ENCODE measurements at regions of chr20 and their contacts with region 1.

Region 1: DNA sequence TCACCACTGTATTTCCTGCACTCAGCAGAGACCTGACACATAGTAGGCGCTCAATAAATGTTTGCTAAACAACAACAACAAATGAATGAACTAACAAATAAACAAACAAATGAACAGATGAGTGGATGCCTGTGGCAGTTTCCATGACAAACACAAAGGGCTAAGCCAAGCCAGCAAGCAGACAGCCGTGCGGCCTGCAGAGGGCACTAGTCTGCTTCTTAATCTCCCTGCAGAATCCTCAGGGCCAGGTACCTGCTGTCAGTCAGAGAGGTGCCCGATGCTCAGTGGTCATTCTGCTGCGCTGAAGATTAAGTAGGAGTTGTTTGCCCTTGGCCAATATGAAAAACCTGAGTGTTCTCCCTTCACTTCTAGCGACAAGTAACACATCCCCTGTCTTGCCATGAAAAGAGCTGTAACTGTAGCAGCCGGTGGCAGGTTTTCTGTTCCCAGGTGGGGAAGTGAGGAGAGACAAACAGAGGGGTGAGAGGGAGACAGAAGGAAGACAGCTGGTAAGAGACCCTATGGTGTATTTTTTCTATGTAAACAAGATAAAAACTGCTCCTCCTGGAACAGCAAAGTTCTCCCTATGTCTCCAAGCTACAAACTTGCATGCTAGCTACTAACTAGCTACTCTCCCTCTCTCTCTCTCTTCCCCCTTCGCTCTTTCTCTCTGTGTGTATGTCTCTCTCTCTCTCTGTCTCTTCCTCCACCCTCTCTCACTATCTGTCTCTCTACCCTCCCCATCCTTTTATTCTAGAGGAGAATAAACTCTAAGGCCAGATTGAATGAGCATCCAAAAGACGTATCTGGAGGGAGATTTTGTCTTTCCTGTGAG is at the start of gene MC3R:
- DNase-seq: peak in 7 of 9 donors; percentile 9 to 34 (median 21)
- ATAC-seq: no peak
- H3K4me3 ChIP-seq: no peak within 1 kb of the TSS
- H3K4me3 Mint-ChIP-seq: no peak within 1 kb of the TSS
- H3K27ac ChIP-seq: no peak within 1 kb of the TSS
- H3K27ac Mint-ChIP-seq: no peak within 1 kb of the TSS
- H3K4me1 ChIP-seq: no peaks in the 10 kb centered on the region
- H3K4me1 Mint-ChIP-seq: no peaks in the 10 kb centered on the region
- H3K27me3 ChIP-seq: no peaks in the 10 kb centered on the region
- H3K27me3 Mint-ChIP-seq: peaks cover 10 to 70% (median 59%) of the 10 kb centered on the region in 5 donors
- total RNA-seq, gene MC3R: not detected

Region 2: GRCh38 chr20:56343861-56344381 is 95.8 kb after region 1 on chr20:
- CTCF ChIA-PET with region 1: no interaction called
- POLR2A ChIA-PET with region 1: no interaction called
- intact Hi-C with region 1: loop called (anchors 2 to 5 kb)
- DNase-seq: peak in 6 of 9 donors; percentile 11 to 57 (median 22)
- ATAC-seq: peak; percentile 66
- H3K4me3 ChIP-seq: no peak overlapping the region
- H3K4me3 Mint-ChIP-seq: peak overlapping the region in 8 of 10 donors; percentile 13 to 52 (median 39)
- H3K27ac ChIP-seq: no peak overlapping the region
- H3K27ac Mint-ChIP-seq: no peak overlapping the region
- H3K4me1 ChIP-seq: no peaks in the 10 kb centered on the region
- H3K4me1 Mint-ChIP-seq: peaks cover 0 to 13% (median 6%) of the 10 kb centered on the region in 7 donors
- H3K27me3 ChIP-seq: peaks cover 0 to 10% of the 10 kb centered on the region in 2 donors
- H3K27me3 Mint-ChIP-seq: peaks cover 46 to 79% (median 73%) of the 10 kb centered on the region in 5 donors

Region 3: GRCh38 chr20:56516631-56517030 is 268.5 kb after region 1 on chr20:
- CTCF ChIA-PET with region 1: no interaction called
- POLR2A ChIA-PET with region 1: no interaction called
- intact Hi-C with region 1: loop called in 1 of 2 experiments (anchors 5 kb)
- DNase-seq: no peak
- ATAC-seq: no peak
- H3K4me3 ChIP-seq: no peak overlapping the region
- H3K4me3 Mint-ChIP-seq: no peak overlapping the region
- H3K27ac ChIP-seq: no peak overlapping the region
- H3K27ac Mint-ChIP-seq: no peak overlapping the region
- H3K4me1 ChIP-seq: no peaks in the 10 kb centered on the region
- H3K4me1 Mint-ChIP-seq: peaks cover 0 to 10% (median 0%) of the 10 kb centered on the region in 7 donors
- H3K27me3 ChIP-seq: no peaks in the 10 kb centered on the region
- H3K27me3 Mint-ChIP-seq: no peaks in the 10 kb centered on the region

Region 4: GRCh38 chr20:56722042-56722441 is 473.9 kb after region 1 on chr20:
- CTCF ChIA-PET with region 1: no interaction called
- POLR2A ChIA-PET with region 1: no interaction called
- intact Hi-C with region 1: no loop called
- DNase-seq: no peak
- ATAC-seq: peak; percentile 55
- H3K4me3 ChIP-seq: no peak overlapping the region
- H3K4me3 Mint-ChIP-seq: no peak overlapping the region
- H3K27ac ChIP-seq: no peak overlapping the region
- H3K27ac Mint-ChIP-seq: no peak overlapping the region
- H3K4me1 ChIP-seq: no peaks in the 10 kb centered on the region
- H3K4me1 Mint-ChIP-seq: peaks cover 0 to 6% (median 0%) of the 10 kb centered on the region in 7 donors
- H3K27me3 ChIP-seq: no peaks in the 10 kb centered on the region
- H3K27me3 Mint-ChIP-seq: peaks cover 0 to 25% (median 6%) of the 10 kb centered on the region in 5 donors

Measured in naive thymus-derived CD4-positive, alpha-beta T cell (primary cell).